Activated CD4-positive, alpha-beta memory T cell treated with anti-CD3 and anti-CD28 coated beads for 36 hours (primary cell): ENCODE measurements at regions of chr20 and their contacts with region 1.

Region 1: GRCh38 chr20:35248641-35249475 is 22.4 kb downstream of the MMP24 start:
- DNase-seq: no peak
- H3K4me3 Mint-ChIP-seq: no peak overlapping the region
- H3K27ac Mint-ChIP-seq: no peak overlapping the region
- H3K4me1 Mint-ChIP-seq: peaks cover 13% of the 10 kb centered on the region
- H3K27me3 Mint-ChIP-seq: no peaks in the 10 kb centered on the region

Region 2: GRCh38 chr20:34621383-34622367 is 627.2 kb before region 1 on chr20:
- CTCF ChIA-PET with region 1: no interaction called
- POLR2A ChIA-PET with region 1: no interaction called
- intact Hi-C with region 1: loop called (anchors 5 kb)
- DNase-seq: no peak
- H3K4me3 Mint-ChIP-seq: no peak overlapping the region
- H3K27ac Mint-ChIP-seq: no peak overlapping the region
- H3K4me1 Mint-ChIP-seq: peaks cover 16% of the 10 kb centered on the region
- H3K27me3 Mint-ChIP-seq: no peaks in the 10 kb centered on the region